CD14-positive monocyte (primary cell): ENCODE measurements at regions of chr1 and their contacts with region 1.

Region 1: GRCh38 chr1:203428981-203429599 is 46.5 kb upstream of the PRELP start:
- DNase-seq: no peak
- H3K4me3 ChIP-seq: no peak overlapping the region
- H3K4me3 Mint-ChIP-seq: no peak overlapping the region
- H3K27ac ChIP-seq: no peak overlapping the region
- H3K27ac Mint-ChIP-seq: peak overlapping the region in 1 of 7 donors; percentile 38
- H3K4me1 ChIP-seq: peaks cover 16 to 20% of the 10 kb centered on the region in 2 donors
- H3K4me1 Mint-ChIP-seq: peaks cover 27% of the 10 kb centered on the region
- H3K27me3 ChIP-seq: peaks cover 0 to 10% of the 10 kb centered on the region in 2 donors
- H3K27me3 Mint-ChIP-seq: peaks cover 12 to 29% (median 19%) of the 10 kb centered on the region in 3 donors
- CTCF ChIP-seq: no peak

Region 2: GRCh38 chr1:203381151-203381751 is 47.8 kb before region 1 on chr1:
- intact Hi-C with region 1: loop called in 1 of 2 experiments (anchors 5 kb)
- DNase-seq: peak; percentile 67 to 87 (median 84)
- H3K4me3 ChIP-seq: peak overlapping the region in 1 of 3 experiments; percentile 55
- H3K4me3 Mint-ChIP-seq: peak overlapping the region in 1 of 2 donors; percentile 58
- H3K27ac ChIP-seq: peak overlapping the region in 1 of 2 donors; percentile 70
- H3K27ac Mint-ChIP-seq: peak overlapping the region; percentile 70 to 87 (median 84)
- H3K4me1 ChIP-seq: peaks cover 30 to 31% of the 10 kb centered on the region in 2 donors
- H3K4me1 Mint-ChIP-seq: peaks cover 36% of the 10 kb centered on the region
- H3K27me3 ChIP-seq: no peaks in the 10 kb centered on the region
- H3K27me3 Mint-ChIP-seq: peaks cover 0 to 4% (median 2%) of the 10 kb centered on the region in 3 donors
- CTCF ChIP-seq: no peak

Region 3: GRCh38 chr1:203395751-203396150 is 33.3 kb before region 1 on chr1:
- intact Hi-C with region 1: loop called in 1 of 2 experiments (anchors 5 kb)
- DNase-seq: no peak
- H3K4me3 ChIP-seq: no peak overlapping the region
- H3K4me3 Mint-ChIP-seq: peak overlapping the region in 1 of 2 donors; percentile 67
- H3K27ac ChIP-seq: no peak overlapping the region
- H3K27ac Mint-ChIP-seq: no peak overlapping the region
- H3K4me1 ChIP-seq: peaks cover 3 to 5% of the 10 kb centered on the region in 2 donors
- H3K4me1 Mint-ChIP-seq: peaks cover 9% of the 10 kb centered on the region
- H3K27me3 ChIP-seq: peaks cover 0 to 10% of the 10 kb centered on the region in 2 donors
- H3K27me3 Mint-ChIP-seq: peaks cover 14 to 16% (median 16%) of the 10 kb centered on the region in 3 donors
- CTCF ChIP-seq: peak; percentile 13

Region 4: DNA sequence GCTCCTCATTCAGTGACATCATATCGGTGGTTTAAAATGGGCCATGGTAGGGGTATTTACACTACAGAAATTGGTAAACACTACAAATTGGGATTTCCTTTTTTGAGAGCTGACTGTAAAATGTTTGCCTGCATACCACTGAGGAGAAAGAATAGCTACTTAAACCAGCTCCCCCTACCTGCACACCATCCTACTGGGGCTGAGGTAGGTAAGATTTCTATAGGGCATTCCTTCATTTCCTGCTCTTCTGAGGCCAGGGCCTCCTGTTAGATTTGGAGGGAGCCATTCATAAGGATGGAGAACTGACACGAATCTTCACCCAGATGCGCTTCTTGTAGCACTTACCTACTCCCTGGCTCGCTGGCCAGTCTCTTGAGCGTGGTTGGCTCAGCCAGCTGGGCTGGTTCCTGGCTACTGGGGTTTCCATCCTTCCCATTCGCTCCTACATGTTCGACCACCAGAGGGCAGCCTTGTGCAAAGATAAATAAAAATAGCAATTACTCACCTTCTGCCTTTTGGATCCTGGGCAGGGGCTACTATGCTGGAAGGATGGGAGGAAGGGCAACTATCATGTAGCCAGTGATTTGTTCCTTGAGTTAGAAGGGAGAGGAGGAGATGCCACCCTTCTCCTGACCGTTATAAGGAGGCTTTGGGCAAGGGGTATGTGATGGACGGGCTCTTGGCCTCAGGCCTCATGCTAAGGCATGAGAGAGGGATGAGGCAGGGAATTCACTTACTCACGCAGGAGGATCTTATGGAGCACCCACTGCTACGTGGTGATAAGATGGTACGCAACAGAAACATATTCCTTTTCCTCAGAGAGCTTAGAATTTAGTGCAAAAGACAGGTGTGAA is 75.5 kb after region 1 on chr1:
- intact Hi-C with region 1: no loop called
- DNase-seq: peak; percentile 68 to 78 (median 69)
- H3K4me3 ChIP-seq: no peak overlapping the region
- H3K4me3 Mint-ChIP-seq: no peak overlapping the region
- H3K27ac ChIP-seq: no peak overlapping the region
- H3K27ac Mint-ChIP-seq: no peak overlapping the region
- H3K4me1 ChIP-seq: no peaks in the 10 kb centered on the region
- H3K4me1 Mint-ChIP-seq: peaks cover 2% of the 10 kb centered on the region
- H3K27me3 ChIP-seq: no peaks in the 10 kb centered on the region
- H3K27me3 Mint-ChIP-seq: peaks cover 10 to 18% (median 14%) of the 10 kb centered on the region in 3 donors
- CTCF ChIP-seq: peak; percentile 76